HepG2 (cell line): ENCODE measurements at regions of chr20 and their contacts with region 1.

Region 1: DNA sequence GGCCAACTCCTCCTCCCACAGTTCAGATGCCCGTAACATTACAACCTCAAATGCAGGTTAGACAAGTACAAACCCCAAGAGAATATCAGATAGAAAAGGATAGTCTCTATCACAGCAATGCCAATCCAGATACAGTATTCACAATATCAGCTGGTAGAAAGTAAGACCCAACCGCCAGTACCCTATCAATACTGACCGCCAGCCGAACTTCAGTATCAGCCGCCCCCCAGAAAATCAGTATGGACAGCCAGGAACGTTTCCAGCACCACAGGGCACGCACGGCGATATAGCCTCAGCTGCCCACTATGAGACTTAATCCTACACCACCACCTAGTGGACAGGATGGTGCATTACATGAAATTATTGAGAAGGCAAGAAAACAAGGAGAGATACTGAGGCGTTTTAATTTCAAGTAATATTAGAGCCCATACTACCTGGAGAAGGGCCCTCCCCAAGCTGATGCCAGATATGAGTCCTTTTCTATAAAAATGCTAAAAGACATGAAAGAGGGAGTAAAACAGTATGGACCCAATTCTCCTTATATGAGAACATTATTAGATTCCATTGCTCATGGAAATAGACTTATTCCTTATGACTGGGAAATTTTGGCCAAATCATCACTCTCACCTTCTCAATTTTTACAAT is 17.6 kb upstream of the EIF2S2 start:
- DNase-seq: peak; percentile 89
- ATAC-seq: peak; percentile 94
- H3K4me3 ChIP-seq: peak overlapping the region in 1 of 3 experiments; percentile 36; a peak in 2 of 6 replicates
- H3K27ac ChIP-seq: no peak overlapping the region
- H3K4me1 ChIP-seq: peaks cover 58% of the 10 kb centered on the region
- H3K27me3 ChIP-seq: no peaks in the 10 kb centered on the region
- CTCF ChIP-seq: peak; percentile 98
- EP300 ChIP-seq: no peak
- POLR2A ChIP-seq: no peak
- RAD21 ChIP-seq: peak; percentile 96

Region 2: GRCh38 chr20:33791959-33792597 is 337.6 kb before region 1 on chr20:
- CTCF ChIA-PET with region 1: no interaction called
- POLR2A ChIA-PET with region 1: no interaction called
- in situ Hi-C with region 1: no loop called
- intact Hi-C with region 1: loop called (anchors 2 kb)
- DNase-seq: peak; percentile 61
- ATAC-seq: peak; percentile 63
- H3K4me3 ChIP-seq: no peak overlapping the region
- H3K27ac ChIP-seq: no peak overlapping the region
- H3K4me1 ChIP-seq: peaks cover 43% of the 10 kb centered on the region
- H3K27me3 ChIP-seq: 0 out of 5 replicates have a peak, but pooled peaks cover 0 to 5% of the 10 kb centered on the region in 2 experiments
- CTCF ChIP-seq: peak; percentile 99
- EP300 ChIP-seq: no peak
- POLR2A ChIP-seq: no peak
- RAD21 ChIP-seq: peak; percentile 96

Region 3: DNA sequence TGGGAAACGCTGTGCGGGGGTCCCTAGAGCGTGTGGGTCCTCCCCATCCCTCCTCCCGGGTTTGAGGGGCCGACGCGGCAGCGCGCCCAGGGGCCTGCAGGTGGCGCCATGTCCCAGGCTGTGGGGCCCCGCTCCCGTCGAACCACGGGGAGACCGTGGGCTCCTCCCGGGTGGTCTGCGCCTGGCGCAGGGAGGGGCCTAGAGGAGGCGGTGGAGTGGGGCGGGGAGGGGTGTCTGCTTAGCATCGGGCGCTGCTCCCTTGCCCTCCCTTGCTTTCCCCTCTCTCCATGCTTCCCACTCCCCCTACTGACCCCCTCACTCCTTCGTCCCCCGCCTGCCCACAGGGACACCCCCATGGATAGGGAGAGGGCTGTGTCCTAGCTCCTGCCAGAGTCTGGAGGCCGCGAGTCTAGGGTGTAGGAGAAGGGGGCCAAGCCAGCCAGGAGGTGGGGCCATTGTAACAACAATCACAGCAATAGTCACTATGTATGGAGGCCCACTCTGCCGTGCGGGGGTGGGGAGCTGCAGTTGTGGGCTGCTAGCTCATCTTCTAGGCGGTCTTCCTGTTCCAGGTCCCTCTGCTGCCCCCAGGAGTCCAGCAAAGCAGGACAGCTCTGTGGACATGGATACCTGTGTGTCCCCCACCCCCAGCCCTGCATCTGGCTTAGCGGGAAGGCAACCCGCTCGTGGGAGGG is 266.8 kb before region 1 on chr20:
- CTCF ChIA-PET with region 1: interaction called, 3 read pairs
- POLR2A ChIA-PET with region 1: no interaction called
- in situ Hi-C with region 1: no loop called
- intact Hi-C with region 1: loop called (anchors 1 kb)
- DNase-seq: peak; percentile 76
- ATAC-seq: peak; percentile 74
- H3K4me3 ChIP-seq: peak overlapping the region in 2 of 3 experiments; percentile 13 to 59; a peak in 3 of 6 replicates
- H3K27ac ChIP-seq: no peak overlapping the region
- H3K4me1 ChIP-seq: peaks cover 42% of the 10 kb centered on the region
- H3K27me3 ChIP-seq: peaks cover 5 to 40% of the 10 kb centered on the region in 2 experiments
- CTCF ChIP-seq: peak; percentile 87
- EP300 ChIP-seq: no peak
- POLR2A ChIP-seq: no peak
- RAD21 ChIP-seq: peak; percentile 87

Region 4: GRCh38 chr20:33933469-33933909 is 196.2 kb before region 1 on chr20:
- CTCF ChIA-PET with region 1: interaction called, 12 read pairs
- POLR2A ChIA-PET with region 1: no interaction called
- in situ Hi-C with region 1: no loop called
- intact Hi-C with region 1: loop called (anchors 1 kb)
- DNase-seq: peak; percentile 87
- ATAC-seq: peak; percentile 96
- H3K4me3 ChIP-seq: peak overlapping the region in 1 of 3 experiments; percentile 50; a peak in 1 of 6 replicates
- H3K27ac ChIP-seq: no peak overlapping the region
- H3K4me1 ChIP-seq: peaks cover 19% of the 10 kb centered on the region
- H3K27me3 ChIP-seq: peaks cover 2 to 13% of the 10 kb centered on the region in 2 experiments; a peak in 3 of 5 replicates
- CTCF ChIP-seq: peak; percentile 100
- EP300 ChIP-seq: no peak
- POLR2A ChIP-seq: no peak
- RAD21 ChIP-seq: peak; percentile 99

Region 5: DNA sequence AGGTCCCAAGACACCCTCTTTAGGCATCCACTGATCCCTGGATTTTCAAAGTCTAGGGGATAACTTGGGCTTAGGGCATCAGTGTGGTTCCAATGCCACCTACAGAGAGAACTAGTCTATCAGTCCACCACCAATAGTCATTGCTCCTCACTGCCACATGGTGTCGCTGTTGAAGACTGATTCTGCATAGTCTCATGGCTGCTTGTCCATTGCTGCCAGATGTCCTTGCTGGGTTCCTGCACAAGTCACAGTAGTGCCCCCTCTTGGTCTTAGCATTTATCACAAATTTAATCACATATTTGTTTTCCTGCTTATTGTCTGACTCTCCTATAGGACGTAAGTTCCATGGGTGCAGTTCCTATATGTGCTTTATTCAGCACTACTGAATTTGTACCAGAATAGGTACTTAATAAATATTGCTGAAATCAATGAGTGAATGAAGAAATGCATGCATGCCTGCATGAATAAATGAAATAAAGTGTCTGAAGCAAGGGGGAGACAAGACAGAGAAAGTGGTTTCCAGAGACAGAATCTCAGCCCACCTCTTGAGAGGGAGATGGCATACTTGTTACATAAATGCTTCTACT is 181.8 kb before region 1 on chr20:
- CTCF ChIA-PET with region 1: interaction called, 5 read pairs
- POLR2A ChIA-PET with region 1: no interaction called
- in situ Hi-C with region 1: no loop called
- intact Hi-C with region 1: loop called (anchors 1 kb)
- DNase-seq: peak; percentile 83
- ATAC-seq: peak; percentile 66
- H3K4me3 ChIP-seq: no peak overlapping the region
- H3K27ac ChIP-seq: no peak overlapping the region
- H3K4me1 ChIP-seq: peaks cover 12% of the 10 kb centered on the region; the same call in 1 of the 2 replicates
- H3K27me3 ChIP-seq: peaks cover 0 to 4% of the 10 kb centered on the region in 2 experiments; a peak in 1 of 5 replicates
- CTCF ChIP-seq: peak; percentile 89
- EP300 ChIP-seq: no peak; a peak in 1 of 4 replicates
- POLR2A ChIP-seq: no peak
- RAD21 ChIP-seq: peak; percentile 84

Region 6: GRCh38 chr20:34111702-34112599 is 17.7 kb before region 1 on chr20 and contains the start of gene EIF2S2:
- CTCF ChIA-PET with region 1: no interaction called
- POLR2A ChIA-PET with region 1: interaction called, 45 read pairs
- in situ Hi-C with region 1: no loop called
- intact Hi-C with region 1: no loop called
- DNase-seq: peak; percentile 99
- ATAC-seq: peak; percentile 91
- H3K4me3 ChIP-seq: peak within 1 kb of the TSS; percentile 93 to 100 (median 96)
- H3K27ac ChIP-seq: peak within 1 kb of the TSS; percentile 92
- H3K4me1 ChIP-seq: peaks cover 63% of the 10 kb centered on the region
- H3K27me3 ChIP-seq: peaks cover 0 to 4% of the 10 kb centered on the region in 2 experiments; a peak in 1 of 5 replicates
- CTCF ChIP-seq: no peak; the same call in 1 of the 2 replicates
- EP300 ChIP-seq: peak in 1 of 2 experiments; percentile 76; a peak in 2 of 4 replicates
- POLR2A ChIP-seq: peak; percentile 96 to 97
- RAD21 ChIP-seq: peak; percentile 83
- total RNA-seq, gene EIF2S2: 213 and 316 TPM in 2 replicates

Region 7: GRCh38 chr20:34215711-34216381 is 86.2 kb after region 1 on chr20:
- CTCF ChIA-PET with region 1: no interaction called
- POLR2A ChIA-PET with region 1: no interaction called
- in situ Hi-C with region 1: no loop called
- intact Hi-C with region 1: no loop called
- DNase-seq: peak; percentile 79
- ATAC-seq: peak; percentile 98
- H3K4me3 ChIP-seq: peak overlapping the region; percentile 47 to 74 (median 62)
- H3K27ac ChIP-seq: no peak overlapping the region
- H3K4me1 ChIP-seq: peaks cover 18% of the 10 kb centered on the region
- H3K27me3 ChIP-seq: peaks cover 0 to 65% of the 10 kb centered on the region in 2 experiments; a peak in 3 of 5 replicates
- CTCF ChIP-seq: peak; percentile 54
- EP300 ChIP-seq: no peak
- POLR2A ChIP-seq: no peak
- RAD21 ChIP-seq: peak; percentile 61

Region 8: DNA sequence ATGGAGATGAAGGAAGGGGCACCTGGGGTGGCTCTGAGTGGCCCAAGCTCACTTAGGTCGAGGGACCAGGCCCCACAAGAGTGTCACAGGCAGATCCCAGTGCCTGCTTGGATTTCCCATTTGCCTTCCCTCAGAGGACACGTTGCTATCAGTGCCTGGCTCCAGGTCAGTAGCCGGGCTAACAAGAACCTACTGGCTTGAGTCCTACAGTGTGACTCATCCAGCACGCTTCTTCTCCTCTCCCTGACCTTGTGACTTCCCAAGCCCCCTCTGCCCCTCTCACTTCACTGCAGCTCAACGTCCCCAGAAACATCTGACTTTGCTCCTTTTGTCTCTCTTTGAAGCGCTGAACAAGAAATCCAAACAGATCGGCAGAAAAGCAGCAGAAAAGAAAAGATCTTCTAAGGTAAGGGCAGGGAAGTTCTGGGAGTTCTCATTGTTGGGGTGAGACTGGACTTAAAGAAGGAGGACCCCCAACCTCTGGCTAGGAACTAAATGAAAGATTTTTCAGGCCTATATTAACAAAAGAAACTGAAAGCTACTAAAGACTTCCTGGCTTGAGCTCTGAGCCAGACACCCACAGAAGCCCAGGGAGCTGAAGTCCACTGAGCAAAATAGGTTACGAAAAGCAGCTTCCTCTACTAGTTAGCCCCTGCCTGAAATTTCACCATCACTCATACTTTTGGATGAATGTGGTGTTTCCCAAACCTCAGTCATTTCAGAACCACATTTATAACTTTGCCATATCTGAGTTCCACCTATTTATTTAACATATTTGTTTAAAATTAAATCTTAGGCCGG is 133.0 kb after region 1 on chr20:
- CTCF ChIA-PET with region 1: no interaction called
- POLR2A ChIA-PET with region 1: no interaction called
- in situ Hi-C with region 1: no loop called
- intact Hi-C with region 1: no loop called
- DNase-seq: peak; percentile 70
- ATAC-seq: peak; percentile 84
- H3K4me3 ChIP-seq: peak overlapping the region in 2 of 3 experiments; percentile 45 to 47
- H3K27ac ChIP-seq: peak overlapping the region; percentile 79
- H3K4me1 ChIP-seq: peaks cover 15% of the 10 kb centered on the region
- H3K27me3 ChIP-seq: no peaks in the 10 kb centered on the region
- CTCF ChIP-seq: 0 out of 2 replicates have a peak, but pooled peaks have one; percentile 5
- EP300 ChIP-seq: no peak
- POLR2A ChIP-seq: peak in 1 of 2 experiments; percentile 15; a peak in 1 of 4 replicates
- RAD21 ChIP-seq: no peak

Region 9: DNA sequence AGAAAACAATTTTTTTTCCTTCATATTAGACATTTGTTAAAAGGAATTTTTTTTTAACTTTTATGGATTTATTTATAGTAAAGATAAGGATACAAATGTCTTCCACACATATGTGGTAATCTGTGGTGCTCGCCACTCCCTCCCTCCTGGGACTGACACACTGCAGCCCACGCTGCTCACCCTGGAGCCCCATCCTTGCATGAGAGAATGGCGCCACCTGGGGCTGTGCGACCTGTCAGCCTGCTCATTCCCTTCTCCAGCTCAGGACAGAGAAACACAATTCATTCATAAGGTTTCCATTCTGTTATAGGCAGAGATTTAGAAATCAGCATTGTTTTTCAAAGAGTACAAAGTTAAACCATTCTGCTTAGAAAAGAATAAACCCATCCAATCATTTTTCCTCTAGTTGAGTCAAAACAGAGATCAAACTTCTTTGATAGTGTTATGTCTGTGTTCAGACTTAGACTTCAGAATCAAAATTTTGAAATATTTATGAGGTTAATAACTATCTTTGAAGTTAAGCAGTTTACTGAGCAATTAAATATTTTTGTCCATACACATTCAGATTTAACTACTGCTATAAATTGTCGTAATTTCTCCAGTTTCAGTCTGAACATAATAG is 343.7 kb after region 1 on chr20:
- CTCF ChIA-PET with region 1: no interaction called
- POLR2A ChIA-PET with region 1: no interaction called
- in situ Hi-C with region 1: no loop called
- intact Hi-C with region 1: no loop called
- DNase-seq: peak; percentile 72
- ATAC-seq: peak; percentile 92
- H3K4me3 ChIP-seq: no peak overlapping the region
- H3K27ac ChIP-seq: no peak overlapping the region
- H3K4me1 ChIP-seq: peaks cover 10% of the 10 kb centered on the region
- H3K27me3 ChIP-seq: no peaks in the 10 kb centered on the region
- CTCF ChIP-seq: peak; percentile 94
- EP300 ChIP-seq: no peak
- POLR2A ChIP-seq: no peak
- RAD21 ChIP-seq: peak; percentile 85